A673 (cell line): ENCODE measurements at regions of chr11 and their contacts with region 1.

Region 1: GRCh38 chr11:36212564-36213392 is 76.4 kb downstream of the COMMD9 start:
- DNase-seq: peak; percentile 54
- H3K4me3 ChIP-seq: no peak overlapping the region
- H3K27ac ChIP-seq: no peak overlapping the region
- H3K4me1 ChIP-seq: no peaks in the 10 kb centered on the region
- H3K27me3 ChIP-seq: no peaks in the 10 kb centered on the region
- CTCF ChIP-seq: no peak

Region 2: DNA sequence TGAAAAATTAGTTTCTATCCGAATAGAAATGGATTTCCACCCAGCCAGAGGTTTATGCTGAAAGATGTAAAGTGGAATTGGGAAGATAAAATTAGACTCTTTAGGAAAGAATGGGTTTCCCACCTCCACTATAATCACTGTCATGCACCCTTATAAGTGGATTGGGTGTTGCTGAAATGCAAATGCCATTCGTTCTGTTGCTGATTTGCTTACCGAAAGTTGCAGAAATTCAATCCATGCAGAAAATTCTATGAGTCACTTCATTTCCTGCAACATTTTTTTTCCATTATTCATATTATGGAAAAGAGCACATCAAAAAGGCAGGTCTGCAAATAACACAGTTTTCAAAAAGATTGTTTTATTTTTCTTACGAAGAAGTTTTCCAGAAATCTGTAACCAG is 203.3 kb before region 1 on chr11:
- CTCF ChIA-PET with region 1: no interaction called
- POLR2A ChIA-PET with region 1: no interaction called
- intact Hi-C with region 1: no loop called
- DNase-seq: peak; percentile 76
- H3K4me3 ChIP-seq: no peak overlapping the region
- H3K27ac ChIP-seq: no peak overlapping the region
- H3K4me1 ChIP-seq: peaks cover 15% of the 10 kb centered on the region
- H3K27me3 ChIP-seq: no peaks in the 10 kb centered on the region
- CTCF ChIP-seq: no peak

Region 3: DNA sequence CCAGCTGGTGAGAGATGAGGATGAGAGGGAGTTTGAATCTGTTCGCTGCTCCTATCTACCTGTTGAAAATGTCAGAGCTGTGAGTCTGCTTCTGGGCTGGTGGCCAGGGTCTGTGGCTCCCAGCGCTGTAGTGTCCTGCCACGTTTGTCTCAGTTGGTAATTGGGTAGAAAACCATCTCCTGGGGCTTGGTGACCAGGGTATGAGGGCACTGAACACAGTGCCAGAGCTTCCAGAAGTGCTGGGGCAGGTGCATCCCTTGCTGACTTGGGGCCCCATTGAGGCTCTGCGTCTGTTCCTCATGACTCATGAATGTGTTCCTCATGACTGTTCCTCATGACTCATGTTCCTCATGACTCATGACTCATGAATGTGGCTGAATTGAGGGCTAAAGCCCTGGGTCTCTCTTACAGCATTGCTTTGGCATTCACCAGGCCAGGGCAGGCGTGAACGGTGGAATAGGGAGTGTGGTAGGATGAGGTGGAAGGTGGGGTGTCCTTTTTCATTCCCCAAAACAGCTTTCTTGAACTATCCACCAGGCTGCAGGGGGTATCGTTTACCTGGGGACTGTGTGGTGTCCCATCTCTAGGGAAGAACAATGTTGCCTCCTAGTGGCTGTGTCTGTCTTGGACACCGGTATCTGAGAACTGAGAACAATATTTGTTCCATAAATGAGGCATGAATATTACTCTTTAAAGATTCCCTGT is 63.1 kb before region 1 on chr11:
- CTCF ChIA-PET with region 1: no interaction called
- POLR2A ChIA-PET with region 1: no interaction called
- intact Hi-C with region 1: no loop called
- DNase-seq: peak; percentile 97
- H3K4me3 ChIP-seq: no peak overlapping the region
- H3K27ac ChIP-seq: no peak overlapping the region
- H3K4me1 ChIP-seq: peaks cover 10% of the 10 kb centered on the region
- H3K27me3 ChIP-seq: no peaks in the 10 kb centered on the region
- CTCF ChIP-seq: peak; percentile 76

Region 4: DNA sequence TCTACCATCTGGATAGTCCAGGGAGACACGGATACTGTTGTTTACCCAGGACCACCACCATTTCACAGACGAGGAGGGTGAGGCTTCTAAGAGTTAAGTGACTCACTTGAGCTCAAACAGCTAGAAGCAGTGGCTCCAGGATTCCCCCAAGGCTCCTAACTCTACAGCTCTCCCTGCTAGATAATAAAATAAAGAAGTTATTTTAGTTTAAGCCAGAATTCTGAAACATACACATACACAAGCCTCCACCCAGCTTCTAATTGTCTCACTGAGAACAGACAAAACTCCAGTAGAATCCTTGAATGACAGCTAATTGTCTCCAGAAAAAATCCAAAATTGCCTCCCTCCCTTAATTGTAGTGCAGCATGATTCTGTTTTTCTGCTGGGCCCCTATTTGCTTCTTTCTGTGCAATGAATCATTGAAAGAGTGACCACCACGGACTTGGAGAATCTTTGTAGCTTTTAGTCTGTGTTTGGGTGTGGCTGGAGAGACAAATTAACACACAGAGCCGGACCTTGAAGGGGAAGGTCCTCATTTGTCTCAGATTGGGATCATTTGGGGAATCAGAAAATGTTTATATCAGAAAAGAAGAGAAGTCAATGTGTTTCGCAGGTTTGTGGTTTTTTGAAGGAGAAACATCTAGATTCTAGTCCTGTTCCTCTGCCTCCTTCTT is 11.6 kb after region 1 on chr11:
- CTCF ChIA-PET with region 1: no interaction called
- POLR2A ChIA-PET with region 1: interaction called, 17 read pairs
- intact Hi-C with region 1: no loop called
- DNase-seq: no peak
- H3K4me3 ChIP-seq: no peak overlapping the region
- H3K27ac ChIP-seq: no peak overlapping the region
- H3K4me1 ChIP-seq: no peaks in the 10 kb centered on the region
- H3K27me3 ChIP-seq: no peaks in the 10 kb centered on the region
- CTCF ChIP-seq: no peak